ENCODE measurements at regions of chr19 and their contacts with region 1.

Region 1: GRCh38 chr19:54448774-54449700 is at the start of gene LENG8:
- DNase-seq: peak; percentile 98 to 99 (median 98)
- ATAC-seq: peak; percentile 97 to 98 (median 98)
- H3K4me3 ChIP-seq: peak within 1 kb of the TSS; percentile 58 to 99 (median 92)
- H3K27ac ChIP-seq: peak within 1 kb of the TSS; percentile 87 to 98 (median 96)
- H3K4me1 ChIP-seq: peaks cover 11 to 52% (median 35%) of the 10 kb centered on the region in 12 donors
- H3K27me3 ChIP-seq: no peaks in the 10 kb centered on the region
- CTCF ChIP-seq: no peak
- POLR2A ChIP-seq: peak; percentile 71 to 94
- total RNA-seq, gene LENG8: 23.6 to 82.9 (median 58.8) TPM

Region 2: GRCh38 chr19:54463531-54464043 is 14.6 kb after region 1 on chr19 and contains the start of gene LENG9:
- intact Hi-C with region 1: loop called in 4 of 10 experiments (anchors 1 to 2 kb)
- DNase-seq: peak; percentile 97 to 99 (median 98)
- ATAC-seq: peak; percentile 71 to 85 (median 76)
- H3K4me3 ChIP-seq: peak within 1 kb of the TSS; percentile 40 to 78 (median 64)
- H3K27ac ChIP-seq: peak within 1 kb of the TSS; percentile 94 to 99 (median 98)
- H3K4me1 ChIP-seq: peaks cover 0 to 46% (median 30%) of the 10 kb centered on the region in 12 donors
- H3K27me3 ChIP-seq: peaks cover 0 to 8% (median 0%) of the 10 kb centered on the region in 9 donors
- CTCF ChIP-seq: no peak
- POLR2A ChIP-seq: peak in 1 of 2 donors; percentile 90
- total RNA-seq, gene LENG9: 1.5 to 4.1 (median 2.4) TPM

Measured in heart left ventricle (tissue), 16 donors.